PC-9 (cell line): ENCODE measurements at regions of chr1 and their contacts with region 1.

Region 1: GRCh38 chr1:223700942-223701637 is 11.2 kb upstream of the CAPN2 start:
- DNase-seq: peak; percentile 91 to 97
- H3K4me3 ChIP-seq: peak overlapping the region; percentile 47; the same call in 1 of the 2 replicates
- H3K27ac ChIP-seq: peak overlapping the region; percentile 100
- H3K4me1 ChIP-seq: peaks cover 75% of the 10 kb centered on the region
- H3K27me3 ChIP-seq: no peaks in the 10 kb centered on the region
- CTCF ChIP-seq: no peak

Region 2: GRCh38 chr1:223680188-223680587 is 20.9 kb before region 1 on chr1:
- CTCF ChIA-PET with region 1: no interaction called
- POLR2A ChIA-PET with region 1: no interaction called
- intact Hi-C with region 1: no loop called
- DNase-seq: no peak
- H3K4me3 ChIP-seq: no peak overlapping the region
- H3K27ac ChIP-seq: no peak overlapping the region
- H3K4me1 ChIP-seq: no peaks in the 10 kb centered on the region
- H3K27me3 ChIP-seq: no peaks in the 10 kb centered on the region
- CTCF ChIP-seq: no peak

Region 3: GRCh38 chr1:223720928-223721591 is 20.0 kb after region 1 on chr1:
- CTCF ChIA-PET with region 1: no interaction called
- POLR2A ChIA-PET with region 1: interaction called, 47 read pairs
- intact Hi-C with region 1: loop called (anchors 2 kb)
- DNase-seq: peak; percentile 60 to 99
- H3K4me3 ChIP-seq: no peak overlapping the region
- H3K27ac ChIP-seq: peak overlapping the region; percentile 92
- H3K4me1 ChIP-seq: peaks cover 87% of the 10 kb centered on the region
- H3K27me3 ChIP-seq: no peaks in the 10 kb centered on the region
- CTCF ChIP-seq: no peak

Region 4: DNA sequence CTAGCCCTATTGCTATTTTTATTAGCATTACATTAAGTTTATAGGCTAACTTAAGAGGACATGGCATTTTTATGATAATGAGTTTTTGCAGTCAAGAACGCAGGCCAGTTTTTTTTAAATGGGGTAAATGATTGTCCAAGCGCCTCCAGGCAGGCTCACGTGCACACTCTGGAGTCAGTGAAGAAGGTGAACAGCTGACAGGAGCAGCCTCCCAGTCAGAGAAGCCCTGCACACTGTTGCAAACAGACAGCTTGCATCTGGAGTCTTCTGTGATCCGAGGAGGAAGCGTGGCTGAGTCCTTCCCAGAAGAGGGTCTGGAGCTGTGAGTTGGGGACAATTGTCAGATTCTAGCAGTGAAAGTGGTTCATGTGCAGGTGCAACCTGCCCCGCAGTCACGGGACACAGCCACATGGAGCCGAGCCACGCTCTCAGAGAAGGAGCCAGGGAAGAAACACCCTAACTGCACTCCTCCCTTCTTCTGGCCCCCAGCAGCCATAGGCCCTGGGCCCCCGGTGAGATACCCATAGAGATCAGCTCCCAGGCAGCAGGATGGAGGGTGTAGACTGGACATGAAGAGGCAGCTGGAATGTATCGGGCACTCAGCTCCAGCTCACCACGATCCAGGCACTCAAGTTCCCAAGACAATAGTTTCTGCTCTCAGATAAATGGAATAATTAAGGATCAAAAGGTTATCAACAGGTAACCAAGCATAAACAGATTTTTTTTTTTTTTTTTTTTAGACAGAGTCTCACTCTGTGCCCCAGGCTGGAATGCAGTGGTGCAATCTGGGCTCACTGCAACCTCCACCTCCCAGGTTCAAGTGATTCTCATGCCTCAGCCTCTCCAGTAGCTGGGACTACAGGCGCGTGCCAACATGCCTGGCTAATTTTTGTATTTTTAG is 37.6 kb after region 1 on chr1:
- CTCF ChIA-PET with region 1: no interaction called
- POLR2A ChIA-PET with region 1: interaction called, 17 read pairs
- intact Hi-C with region 1: no loop called
- DNase-seq: peak; percentile 46 to 73
- H3K4me3 ChIP-seq: no peak overlapping the region
- H3K27ac ChIP-seq: peak overlapping the region; percentile 73
- H3K4me1 ChIP-seq: peaks cover 46% of the 10 kb centered on the region
- H3K27me3 ChIP-seq: no peaks in the 10 kb centered on the region
- CTCF ChIP-seq: no peak

Region 5: GRCh38 chr1:223811634-223812415 is 110.7 kb after region 1 on chr1:
- CTCF ChIA-PET with region 1: interaction called, 3 read pairs
- POLR2A ChIA-PET with region 1: no interaction called
- intact Hi-C with region 1: loop called (anchors 2 kb)
- DNase-seq: peak in 1 of 2 experiments; percentile 55
- H3K4me3 ChIP-seq: no peak overlapping the region
- H3K27ac ChIP-seq: peak overlapping the region; percentile 35
- H3K4me1 ChIP-seq: peaks cover 34% of the 10 kb centered on the region
- H3K27me3 ChIP-seq: no peaks in the 10 kb centered on the region
- CTCF ChIP-seq: peak; percentile 73

Region 6: DNA sequence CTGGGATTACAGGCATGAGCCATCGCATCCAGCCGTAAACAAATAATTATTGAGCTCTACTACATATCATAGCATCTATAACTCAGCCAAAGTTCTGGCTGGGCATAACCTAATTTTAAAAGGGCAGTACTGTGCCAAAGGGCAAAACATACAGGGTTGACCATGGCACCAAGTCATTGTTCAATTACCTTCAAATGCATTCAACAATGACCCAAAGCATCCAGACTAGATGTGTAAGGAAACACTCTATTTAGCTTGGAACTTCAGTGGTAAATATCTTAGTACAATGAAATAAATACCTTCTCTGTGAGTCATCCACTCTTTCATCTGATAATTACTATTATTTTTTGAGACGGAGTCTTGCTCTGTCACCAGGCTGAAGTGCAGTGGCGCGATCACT is 558.8 kb after region 1 on chr1:
- CTCF ChIA-PET with region 1: no interaction called
- POLR2A ChIA-PET with region 1: no interaction called
- intact Hi-C with region 1: no loop called
- DNase-seq: peak in 1 of 2 experiments; percentile 45
- H3K4me3 ChIP-seq: no peak overlapping the region
- H3K27ac ChIP-seq: no peak overlapping the region
- H3K4me1 ChIP-seq: peaks cover 7% of the 10 kb centered on the region; the same call in 1 of the 2 replicates
- H3K27me3 ChIP-seq: no peaks in the 10 kb centered on the region
- CTCF ChIP-seq: no peak

Region 7: DNA sequence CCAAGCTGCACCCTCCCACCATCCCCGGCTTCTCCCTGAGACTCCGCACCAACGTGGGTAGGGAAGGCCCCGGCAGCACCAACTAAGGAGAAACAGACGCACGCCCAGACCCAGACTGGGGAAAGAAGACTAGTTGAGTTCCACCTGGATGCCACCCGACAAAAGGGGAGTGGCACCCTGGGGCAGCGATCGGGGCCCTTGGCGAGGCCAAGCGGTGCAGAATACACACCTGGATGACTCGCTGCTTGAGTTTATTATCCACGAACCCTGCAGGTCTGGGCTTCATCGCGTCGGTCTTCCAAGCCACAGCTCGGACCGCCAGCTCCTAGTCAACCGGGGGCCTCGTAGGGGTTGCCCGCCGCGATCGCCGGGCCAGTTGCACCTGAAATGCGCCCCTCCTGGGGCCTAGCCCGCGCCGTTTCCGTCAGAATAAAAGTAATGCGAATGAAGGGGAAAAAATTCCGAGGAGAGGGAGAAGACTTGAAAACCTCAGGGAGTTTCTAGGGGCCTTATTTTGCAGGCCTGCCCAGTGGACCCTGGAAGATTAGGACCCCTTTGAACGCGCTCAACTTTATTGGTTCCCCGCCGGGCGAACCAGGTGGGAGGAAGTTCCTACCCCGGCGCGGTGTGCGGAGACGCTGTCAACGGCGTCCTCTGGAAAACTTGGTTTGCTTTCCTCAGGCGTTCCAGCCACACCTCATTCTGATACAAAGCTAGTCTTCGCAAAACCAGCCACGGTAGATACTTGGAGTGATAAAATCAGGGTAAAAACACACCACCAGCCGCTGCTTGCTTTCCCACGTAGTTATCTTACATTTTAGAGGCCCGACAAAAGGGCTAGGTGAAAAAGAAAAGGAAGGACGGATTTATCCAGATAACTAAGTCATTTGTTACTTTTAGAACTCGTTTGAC is 629.0 kb after region 1 on chr1 and contains the start of gene NVL:
- CTCF ChIA-PET with region 1: interaction called, 4 read pairs
- POLR2A ChIA-PET with region 1: no interaction called
- intact Hi-C with region 1: loop called (anchors 1 kb)
- DNase-seq: peak; percentile 84 to 91
- H3K4me3 ChIP-seq: peak within 1 kb of the TSS; percentile 87
- H3K27ac ChIP-seq: peak within 1 kb of the TSS; percentile 78
- H3K4me1 ChIP-seq: peaks cover 16% of the 10 kb centered on the region
- H3K27me3 ChIP-seq: no peaks in the 10 kb centered on the region
- CTCF ChIP-seq: no peak
- total RNA-seq, gene NVL: 27.3 and 36.1 TPM in 2 replicates

Region 8: DNA sequence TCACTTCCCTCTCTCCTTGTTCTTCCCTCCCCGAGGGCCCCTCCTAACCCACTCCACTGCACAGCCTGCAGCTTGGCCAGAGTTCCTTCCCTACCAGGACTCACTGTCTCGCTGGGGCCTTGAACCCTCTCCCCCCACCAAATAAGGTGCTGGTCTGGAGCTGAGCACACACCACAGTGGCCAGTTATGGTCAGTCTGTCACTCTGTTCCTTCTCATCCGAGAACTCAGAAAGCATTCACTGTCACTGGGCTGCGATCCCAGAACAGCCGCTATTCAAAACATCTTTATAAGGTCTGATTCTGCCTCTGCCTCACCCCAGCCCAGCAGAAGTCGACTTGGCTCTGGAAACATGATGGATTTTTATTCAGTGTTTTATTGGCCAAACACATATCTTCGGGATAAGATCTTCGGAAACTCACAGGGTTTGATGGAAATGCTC is 1746.6 kb after region 1 on chr1:
- CTCF ChIA-PET with region 1: no interaction called
- POLR2A ChIA-PET with region 1: interaction called, 5 read pairs
- intact Hi-C with region 1: loop called (anchors 5 kb)
- DNase-seq: no peak
- H3K4me3 ChIP-seq: no peak overlapping the region
- H3K27ac ChIP-seq: peak overlapping the region; percentile 95
- H3K4me1 ChIP-seq: peaks cover 80% of the 10 kb centered on the region
- H3K27me3 ChIP-seq: no peaks in the 10 kb centered on the region
- CTCF ChIP-seq: no peak